ENCODE measurements at regions of chr10 and their contacts with region 1.

Region 1: GRCh38 chr10:122551450-122551849 is 9.1 kb upstream of the DMBT1 start:
- DNase-seq: no peak
- H3K4me3 ChIP-seq: no peak overlapping the region
- H3K27ac ChIP-seq: no peak overlapping the region
- H3K4me1 ChIP-seq: no peaks in the 10 kb centered on the region
- H3K27me3 ChIP-seq: peaks cover 0 to 5% of the 10 kb centered on the region in 2 donors
- CTCF ChIP-seq: no peak

Region 2: GRCh38 chr10:122352817-122353525 is 198.5 kb before region 1 on chr10:
- intact Hi-C with region 1: loop called (anchors 5 kb)
- DNase-seq: no peak
- H3K4me3 ChIP-seq: no peak overlapping the region
- H3K27ac ChIP-seq: no peak overlapping the region
- H3K4me1 ChIP-seq: no peaks in the 10 kb centered on the region
- H3K27me3 ChIP-seq: no peaks in the 10 kb centered on the region
- CTCF ChIP-seq: no peak

Region 3: GRCh38 chr10:122388287-122388997 is 163.0 kb before region 1 on chr10:
- intact Hi-C with region 1: no loop called
- DNase-seq: no peak
- H3K4me3 ChIP-seq: no peak overlapping the region
- H3K27ac ChIP-seq: no peak overlapping the region
- H3K4me1 ChIP-seq: peaks cover 0 to 23% (median 3%) of the 10 kb centered on the region in 4 donors
- H3K27me3 ChIP-seq: no peaks in the 10 kb centered on the region
- CTCF ChIP-seq: no peak

Region 4: GRCh38 chr10:122854648-122855047 is 303.2 kb after region 1 on chr10:
- intact Hi-C with region 1: no loop called
- DNase-seq: no peak
- H3K4me3 ChIP-seq: no peak overlapping the region
- H3K27ac ChIP-seq: no peak overlapping the region
- H3K4me1 ChIP-seq: no peaks in the 10 kb centered on the region
- H3K27me3 ChIP-seq: no peaks in the 10 kb centered on the region
- CTCF ChIP-seq: no peak